CD14-positive monocyte (primary cell): ENCODE measurements at regions of chr11 and their contacts with region 1.

Region 1: DNA sequence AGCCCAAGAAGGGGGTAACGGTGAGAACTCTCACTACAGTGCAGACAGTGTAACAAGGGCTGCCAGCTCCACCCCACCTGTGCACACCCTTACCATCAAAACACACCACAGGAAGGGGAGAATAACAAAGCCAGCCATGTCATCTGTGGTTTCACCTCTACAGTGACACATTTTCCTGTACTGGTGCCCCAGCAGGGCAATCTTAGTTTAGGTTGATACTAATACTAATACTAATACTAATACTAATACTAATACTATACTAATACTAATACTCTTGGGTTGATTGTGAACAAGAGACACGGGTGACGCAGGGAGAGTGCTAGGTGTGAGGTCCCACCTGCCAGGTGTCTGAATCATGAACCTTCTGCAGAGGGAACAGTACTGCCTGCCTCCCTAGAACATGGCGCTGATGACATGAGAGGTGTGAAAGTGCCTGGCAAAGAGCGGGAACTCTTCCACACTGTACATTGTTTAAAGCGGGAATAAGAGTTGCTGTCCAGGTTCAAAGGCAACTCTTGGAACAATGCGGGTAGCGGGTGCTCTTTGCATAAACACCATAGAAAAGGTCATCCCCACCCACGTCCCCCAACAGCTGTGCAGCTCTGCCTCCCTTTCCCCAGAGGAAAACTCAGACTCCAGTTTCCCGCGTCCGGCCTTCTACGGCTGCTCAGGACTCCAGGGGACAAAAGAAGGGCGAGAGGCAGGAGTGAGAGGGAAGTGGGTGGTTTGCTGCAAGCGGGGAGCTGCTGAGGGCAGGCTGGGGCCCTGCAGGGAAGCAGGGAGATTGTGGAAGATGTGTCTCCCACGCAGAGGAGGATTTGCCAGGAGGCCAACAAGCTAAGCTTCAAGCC is 25.0 kb upstream of the TMPRSS4 start:
- DNase-seq: no peak
- H3K4me3 ChIP-seq: no peak overlapping the region
- H3K4me3 Mint-ChIP-seq: no peak overlapping the region
- H3K27ac ChIP-seq: no peak overlapping the region
- H3K27ac Mint-ChIP-seq: peak overlapping the region in 2 of 7 donors; percentile 10 to 43
- H3K4me1 ChIP-seq: peaks cover 13 to 15% of the 10 kb centered on the region in 2 donors
- H3K4me1 Mint-ChIP-seq: peaks cover 28% of the 10 kb centered on the region
- H3K27me3 ChIP-seq: no peaks in the 10 kb centered on the region
- H3K27me3 Mint-ChIP-seq: peaks cover 4 to 6% (median 6%) of the 10 kb centered on the region in 3 donors
- CTCF ChIP-seq: no peak

Region 2: GRCh38 chr11:117997823-117998579 is 53.8 kb before region 1 on chr11:
- intact Hi-C with region 1: loop called in 1 of 2 experiments (anchors 10 kb)
- DNase-seq: no peak
- H3K4me3 ChIP-seq: no peak overlapping the region
- H3K4me3 Mint-ChIP-seq: no peak overlapping the region
- H3K27ac ChIP-seq: peak overlapping the region; percentile 76 to 95
- H3K27ac Mint-ChIP-seq: peak overlapping the region; percentile 9 to 96 (median 88)
- H3K4me1 ChIP-seq: peaks cover 85 to 100% of the 10 kb centered on the region in 2 donors
- H3K4me1 Mint-ChIP-seq: peaks cover 86% of the 10 kb centered on the region
- H3K27me3 ChIP-seq: no peaks in the 10 kb centered on the region
- H3K27me3 Mint-ChIP-seq: peaks cover 0 to 2% (median 0%) of the 10 kb centered on the region in 3 donors
- CTCF ChIP-seq: no peak